PC-3 (cell line): ENCODE measurements at regions of chr1 and their contacts with region 1.

Region 1: DNA sequence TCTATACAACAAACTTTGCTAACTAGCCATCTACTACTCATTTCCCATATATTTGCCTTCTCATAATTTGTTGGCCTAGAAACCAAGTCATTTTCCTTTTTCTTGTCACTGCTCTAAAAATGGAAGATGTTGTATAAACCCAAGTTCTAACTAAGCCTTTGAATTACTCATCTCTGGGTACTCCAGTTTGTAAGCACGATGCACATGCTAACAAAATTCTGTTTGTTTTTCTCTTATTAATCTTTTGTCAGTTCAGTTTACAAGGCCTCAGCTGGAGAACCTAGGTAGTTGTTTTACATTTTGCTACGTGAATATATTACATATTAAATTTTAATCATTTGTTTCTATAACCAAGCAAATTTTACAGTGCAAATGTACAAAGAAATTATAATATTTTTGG is 663.2 kb upstream of the RGS18 start:
- DNase-seq: peak; percentile 49
- ATAC-seq: peak; percentile 91
- H3K4me3 ChIP-seq: no peak overlapping the region
- H3K27ac ChIP-seq: peak overlapping the region; percentile 68
- H3K4me1 ChIP-seq: peaks cover 10% of the 10 kb centered on the region
- H3K27me3 ChIP-seq: no peaks in the 10 kb centered on the region
- CTCF ChIP-seq: no peak

Region 2: GRCh38 chr1:191641420-191642260 is 146.6 kb after region 1 on chr1:
- CTCF ChIA-PET with region 1: no interaction called
- POLR2A ChIA-PET with region 1: no interaction called
- intact Hi-C with region 1: no loop called
- DNase-seq: peak; percentile 59
- ATAC-seq: peak; percentile 71
- H3K4me3 ChIP-seq: no peak overlapping the region
- H3K27ac ChIP-seq: peak overlapping the region; percentile 17
- H3K4me1 ChIP-seq: peaks cover 3% of the 10 kb centered on the region; the same call in 1 of the 2 replicates
- H3K27me3 ChIP-seq: no peaks in the 10 kb centered on the region
- CTCF ChIP-seq: no peak

Region 3: DNA sequence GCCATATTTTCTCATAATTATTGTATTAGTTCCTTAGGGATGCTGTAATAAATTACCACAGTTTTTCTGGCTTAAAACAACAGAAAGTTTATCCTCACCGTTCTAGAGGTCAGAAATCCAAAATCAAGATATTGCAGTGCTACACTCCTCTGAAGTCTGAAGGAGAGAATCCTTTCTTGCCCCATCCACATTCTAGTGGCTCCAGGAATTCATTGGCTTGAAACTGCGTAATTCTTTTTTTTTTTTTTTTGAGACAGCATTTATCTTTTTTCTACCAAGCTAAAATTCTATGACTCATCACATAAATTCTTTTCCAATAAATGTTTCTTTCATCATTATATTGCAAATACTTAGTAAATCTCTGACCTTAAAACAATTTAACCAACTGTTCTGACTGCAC is 212.2 kb after region 1 on chr1:
- CTCF ChIA-PET with region 1: no interaction called
- POLR2A ChIA-PET with region 1: no interaction called
- intact Hi-C with region 1: loop called (anchors 1 kb)
- DNase-seq: peak; percentile 33
- ATAC-seq: no peak
- H3K4me3 ChIP-seq: no peak overlapping the region
- H3K27ac ChIP-seq: no peak overlapping the region
- H3K4me1 ChIP-seq: peaks cover 11% of the 10 kb centered on the region; the same call in 1 of the 2 replicates
- H3K27me3 ChIP-seq: no peaks in the 10 kb centered on the region
- CTCF ChIP-seq: no peak